ENCODE measurements at regions of chr1 and their contacts with region 1.

Region 1: GRCh38 chr1:241611063-241611462 is 29.1 kb downstream of the CHML start:
- ATAC-seq: peak in 3 of 8 experiments; percentile 78 to 91 (median 83)
- H3K4me3 ChIP-seq: no peak overlapping the region
- H3K27ac ChIP-seq: no peak overlapping the region
- H3K4me1 ChIP-seq: no peaks in the 10 kb centered on the region

Region 2: DNA sequence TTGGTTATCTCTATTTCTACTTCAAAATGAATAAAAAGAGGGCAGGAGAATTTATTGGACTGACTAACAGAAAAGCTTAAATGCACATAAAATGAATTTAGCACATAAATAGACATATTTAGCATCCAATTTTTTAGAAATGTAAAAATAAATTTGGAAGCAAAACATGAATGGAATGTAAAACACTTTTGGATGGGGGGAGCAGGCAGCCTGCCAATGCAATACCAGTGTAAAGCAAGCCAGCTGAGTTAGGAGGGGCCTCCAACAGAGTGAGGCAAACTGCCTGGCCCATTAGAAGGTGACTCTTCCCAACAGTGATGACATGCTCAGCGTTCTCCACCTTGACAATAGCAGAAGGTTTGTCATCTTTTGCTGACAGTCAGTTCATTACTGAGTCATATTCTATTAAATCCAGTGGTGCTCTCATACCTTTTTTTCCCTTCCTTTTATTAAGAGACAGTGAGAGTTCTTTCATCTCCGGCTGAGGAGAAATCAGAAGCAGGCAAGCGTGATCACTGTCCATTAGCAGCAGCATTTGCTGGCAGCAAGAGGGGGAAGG is 217.5 kb after region 1 on chr1:
- in situ Hi-C with region 1: loop called in 2 of 9 experiments (anchors 10 kb)
- ATAC-seq: peak; percentile 91 to 99 (median 98)
- H3K4me3 ChIP-seq: peak overlapping the region in 1 of 5 donors; percentile 1
- H3K27ac ChIP-seq: peak overlapping the region in 1 of 2 donors; percentile 9
- H3K4me1 ChIP-seq: peaks cover 7 to 10% of the 10 kb centered on the region in 2 donors

Measured in motor neuron (in vitro differentiated cells).